HCT116 (cell line): ENCODE measurements at regions of chr7 and their contacts with region 1.

Region 1: GRCh38 chr7:26675143-26675887 is 189.1 kb downstream of the SKAP2 start:
- DNase-seq: no peak
- ATAC-seq: peak; percentile 67
- H3K4me3 ChIP-seq: no peak overlapping the region
- H3K27ac ChIP-seq: no peak overlapping the region
- H3K4me1 ChIP-seq: peaks cover 0 to 7% of the 10 kb centered on the region in 2 experiments; a peak in 1 of 4 replicates
- H3K27me3 ChIP-seq: no peaks in the 10 kb centered on the region
- CTCF ChIP-seq: no peak
- POLR2A ChIP-seq: no peak
- RAD21 ChIP-seq: no peak

Region 2: DNA sequence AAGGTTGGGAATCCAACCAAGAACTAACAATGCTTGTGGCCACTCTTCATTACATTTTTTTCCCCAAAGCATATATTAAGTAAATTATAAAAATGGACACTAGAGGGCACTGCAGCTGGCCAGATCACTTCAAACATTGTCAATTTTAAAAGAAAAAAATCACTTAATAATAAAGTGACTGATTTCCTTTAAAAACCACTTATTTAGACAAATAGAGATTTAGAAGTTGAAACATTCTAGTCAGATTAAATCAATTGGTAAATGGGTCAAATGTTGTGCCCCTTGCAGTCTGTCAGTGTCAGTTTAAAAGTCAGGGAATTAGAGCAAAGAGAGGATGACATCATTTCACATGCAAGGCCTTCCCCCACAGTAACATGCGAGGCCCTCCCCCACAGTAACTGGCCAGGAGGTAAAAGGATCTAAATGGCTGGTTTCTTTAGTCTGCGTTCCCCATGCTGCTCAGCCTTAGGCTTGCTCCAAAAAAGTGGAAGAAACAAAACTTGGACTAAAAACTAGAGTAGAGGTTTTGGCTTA is 11.2 kb after region 1 on chr7:
- CTCF ChIA-PET with region 1: interaction called, 11 read pairs
- POLR2A ChIA-PET with region 1: no interaction called
- RAD21 ChIA-PET with region 1: no interaction called
- intact Hi-C with region 1: no loop called
- DNase-seq: peak; percentile 21
- ATAC-seq: peak; percentile 78
- H3K4me3 ChIP-seq: no peak overlapping the region
- H3K27ac ChIP-seq: no peak overlapping the region
- H3K4me1 ChIP-seq: peaks cover 4 to 11% of the 10 kb centered on the region in 2 experiments; a peak in 3 of 4 replicates
- H3K27me3 ChIP-seq: no peaks in the 10 kb centered on the region
- CTCF ChIP-seq: peak; percentile 53 to 72 (median 66)
- POLR2A ChIP-seq: no peak
- RAD21 ChIP-seq: peak; percentile 71

Region 3: DNA sequence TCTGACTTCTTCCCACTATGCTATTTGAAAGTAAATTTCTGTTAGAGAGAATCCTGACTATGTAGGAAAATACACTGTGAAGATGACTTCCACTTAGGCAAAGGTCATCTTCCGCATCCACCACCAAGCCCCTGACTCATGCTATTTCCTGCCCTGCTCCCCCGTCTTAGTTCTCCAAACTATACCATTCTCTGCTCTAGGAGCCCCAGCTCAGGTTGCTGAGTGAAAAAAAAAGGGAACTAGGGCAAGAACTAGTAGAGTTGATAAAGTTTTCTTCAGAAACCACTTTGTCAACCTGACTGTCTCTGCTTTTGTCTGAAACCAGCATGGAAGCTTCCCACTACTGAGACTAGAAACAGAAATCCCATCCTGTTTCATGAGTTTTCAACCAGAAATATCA is 664.2 kb after region 1 on chr7:
- CTCF ChIA-PET with region 1: no interaction called
- POLR2A ChIA-PET with region 1: no interaction called
- RAD21 ChIA-PET with region 1: no interaction called
- intact Hi-C with region 1: no loop called
- DNase-seq: no peak
- ATAC-seq: no peak
- H3K4me3 ChIP-seq: no peak overlapping the region
- H3K27ac ChIP-seq: no peak overlapping the region
- H3K4me1 ChIP-seq: no peaks in the 10 kb centered on the region
- H3K27me3 ChIP-seq: no peaks in the 10 kb centered on the region
- CTCF ChIP-seq: no peak
- POLR2A ChIP-seq: no peak
- RAD21 ChIP-seq: no peak